Motor neuron (in vitro differentiated cells): ENCODE measurements at regions of chr9 and their contacts with region 1.

Region 1: DNA sequence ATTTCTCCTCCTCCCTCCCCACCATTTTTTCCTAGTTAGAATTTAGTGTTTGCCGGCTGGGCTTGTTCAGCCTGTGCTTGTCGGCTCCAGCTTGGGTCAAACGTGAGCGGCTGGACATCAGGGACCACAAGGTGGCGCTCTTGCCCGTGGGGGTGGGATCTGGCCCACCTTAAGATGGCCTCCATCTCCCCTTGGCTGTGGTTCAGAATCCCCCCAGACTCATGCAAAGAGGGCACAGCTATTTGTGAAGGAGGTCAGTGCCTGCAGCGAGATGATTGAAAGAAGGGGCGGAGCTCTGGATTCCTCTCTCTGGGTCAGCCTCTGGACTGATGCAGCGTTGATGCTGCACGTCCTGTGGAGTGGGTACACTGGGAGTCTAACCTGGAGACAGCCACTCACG is 283.3 kb upstream of the TUT7 start:
- ATAC-seq: peak in 5 of 8 experiments; percentile 17 to 91 (median 86)
- H3K4me3 ChIP-seq: no peak overlapping the region
- H3K27ac ChIP-seq: no peak overlapping the region
- H3K4me1 ChIP-seq: peaks cover 0 to 8% of the 10 kb centered on the region in 2 donors

Region 2: GRCh38 chr9:86795823-86796553 is 158.5 kb after region 1 on chr9:
- in situ Hi-C with region 1: loop called in 1 of 9 experiments (anchors 25 kb)
- ATAC-seq: peak in 3 of 8 experiments; percentile 38 to 58 (median 41)
- H3K4me3 ChIP-seq: no peak overlapping the region
- H3K27ac ChIP-seq: no peak overlapping the region
- H3K4me1 ChIP-seq: peaks cover 27 to 38% of the 10 kb centered on the region in 2 donors

Region 3: DNA sequence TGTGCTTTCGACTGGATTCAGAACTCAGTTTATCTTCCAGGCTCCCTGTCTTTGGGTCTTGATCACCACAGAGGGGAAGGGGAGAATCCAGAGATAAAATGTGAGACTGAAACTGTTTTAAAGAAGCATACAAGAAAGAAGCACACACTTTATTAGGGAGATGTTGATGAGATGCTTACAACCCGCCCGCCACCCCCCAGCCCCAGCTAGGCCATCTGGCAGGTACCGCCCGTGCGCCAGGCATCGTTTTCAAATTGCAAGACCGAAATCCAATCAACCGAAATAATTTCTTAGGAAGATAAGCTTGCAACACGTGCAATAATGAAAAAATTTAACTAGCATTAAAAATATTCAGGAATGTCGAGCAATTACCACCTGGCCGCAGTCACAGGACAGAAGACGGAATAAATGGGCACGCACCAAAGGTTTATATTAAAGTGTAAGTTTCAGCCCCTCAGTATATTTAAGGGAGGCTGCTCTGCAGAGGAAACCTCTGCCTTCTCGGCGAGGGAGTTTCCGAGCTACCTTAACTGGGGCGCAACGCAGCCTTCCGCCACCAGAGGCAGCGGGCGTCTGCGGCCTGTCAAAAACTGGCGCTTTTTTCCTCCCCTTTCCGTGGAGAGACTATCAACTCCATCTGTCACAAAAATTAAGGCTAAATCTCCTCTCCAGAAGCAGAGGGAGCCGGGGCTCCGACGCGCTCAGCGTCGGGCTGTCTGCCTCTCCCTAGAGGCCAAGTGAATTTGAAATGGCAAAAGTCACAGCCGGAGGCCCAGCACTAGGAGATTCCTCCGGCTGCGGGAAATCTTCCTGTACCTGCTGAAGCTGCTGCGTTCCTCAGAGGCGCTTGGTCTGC is 310.8 kb after region 1 on chr9:
- in situ Hi-C with region 1: loop called in 1 of 9 experiments (anchors 25 kb)
- ATAC-seq: peak; percentile 13 to 40 (median 31)
- H3K4me3 ChIP-seq: peak overlapping the region; percentile 45 to 84 (median 63)
- H3K27ac ChIP-seq: peak overlapping the region in 1 of 2 donors; percentile 11
- H3K4me1 ChIP-seq: peaks cover 6 to 9% of the 10 kb centered on the region in 2 donors

Region 4: DNA sequence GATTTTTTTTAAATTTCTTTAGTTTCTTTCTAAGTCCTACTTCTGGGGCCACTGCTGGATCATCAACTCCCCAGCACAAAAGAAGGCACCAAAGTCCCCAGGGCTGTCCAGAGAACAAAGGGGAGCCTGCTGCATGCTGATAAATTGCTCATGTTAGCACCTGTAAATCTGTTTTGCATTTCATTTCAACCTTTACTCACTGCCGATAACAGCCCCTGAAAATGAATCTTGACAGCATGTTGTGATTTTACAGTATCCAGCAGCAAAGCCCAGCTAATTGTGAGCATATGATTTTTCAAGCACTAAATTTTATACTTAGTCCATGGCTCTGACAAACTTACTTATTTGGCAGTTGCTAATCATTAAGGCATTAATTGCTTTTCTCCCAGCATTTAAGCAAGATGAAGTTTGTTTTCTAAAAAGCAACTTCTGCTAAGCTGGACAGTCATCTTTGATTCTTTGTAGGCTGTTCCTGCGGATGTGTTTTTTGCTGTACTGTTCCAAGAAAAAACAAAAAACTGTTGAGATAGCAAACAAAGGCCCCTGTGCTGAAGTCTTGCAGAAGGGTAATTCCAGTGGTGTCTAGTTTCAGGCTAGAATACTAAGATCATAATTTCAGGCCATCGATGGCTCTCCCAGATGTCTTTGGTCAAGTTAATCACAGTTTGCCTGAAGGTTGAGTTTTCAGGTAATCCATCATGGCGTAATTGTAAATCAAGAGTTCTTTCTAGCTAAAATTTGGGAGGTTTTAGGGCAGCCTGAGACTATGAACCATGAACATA is 382.8 kb after region 1 on chr9:
- in situ Hi-C with region 1: no loop called
- ATAC-seq: no peak
- H3K4me3 ChIP-seq: no peak overlapping the region
- H3K27ac ChIP-seq: no peak overlapping the region
- H3K4me1 ChIP-seq: peaks cover 16 to 25% of the 10 kb centered on the region in 2 donors

Region 5: GRCh38 chr9:87324613-87325194 is 687.2 kb after region 1 on chr9:
- in situ Hi-C with region 1: loop called in 2 of 9 experiments (anchors 25 kb)
- ATAC-seq: peak in 7 of 8 experiments; percentile 25 to 74 (median 48)
- H3K4me3 ChIP-seq: no peak overlapping the region
- H3K27ac ChIP-seq: no peak overlapping the region
- H3K4me1 ChIP-seq: no peaks in the 10 kb centered on the region

Region 6: GRCh38 chr9:87336914-87337333 is 699.4 kb after region 1 on chr9:
- in situ Hi-C with region 1: loop called in 1 of 9 experiments (anchors 25 kb)
- ATAC-seq: peak; percentile 54 to 78 (median 66)
- H3K4me3 ChIP-seq: peak overlapping the region; percentile 21 to 38 (median 37)
- H3K27ac ChIP-seq: no peak overlapping the region
- H3K4me1 ChIP-seq: peaks cover 14 to 17% of the 10 kb centered on the region in 2 donors